ENCODE measurements at regions of chr7 and their contacts with region 1.

Region 1: GRCh38 chr7:17769918-17770317 is 170.4 kb downstream of the SNX13 start:
- DNase-seq: peak; percentile 57 to 71
- H3K4me3 ChIP-seq: no peak overlapping the region
- H3K27ac ChIP-seq: no peak overlapping the region
- H3K4me1 ChIP-seq: peaks cover 24% of the 10 kb centered on the region
- H3K27me3 ChIP-seq: no peaks in the 10 kb centered on the region
- CTCF ChIP-seq: peak; percentile 97

Region 2: GRCh38 chr7:16708980-16709379 is 1060.9 kb before region 1 on chr7:
- CTCF ChIA-PET with region 1: no interaction called
- POLR2A ChIA-PET with region 1: no interaction called
- intact Hi-C with region 1: loop called (anchors 10 kb)
- DNase-seq: peak; percentile 73 to 93
- H3K4me3 ChIP-seq: no peak overlapping the region
- H3K27ac ChIP-seq: peak overlapping the region; percentile 9
- H3K4me1 ChIP-seq: peaks cover 10% of the 10 kb centered on the region
- H3K27me3 ChIP-seq: no peaks in the 10 kb centered on the region
- CTCF ChIP-seq: no peak

Region 3: DNA sequence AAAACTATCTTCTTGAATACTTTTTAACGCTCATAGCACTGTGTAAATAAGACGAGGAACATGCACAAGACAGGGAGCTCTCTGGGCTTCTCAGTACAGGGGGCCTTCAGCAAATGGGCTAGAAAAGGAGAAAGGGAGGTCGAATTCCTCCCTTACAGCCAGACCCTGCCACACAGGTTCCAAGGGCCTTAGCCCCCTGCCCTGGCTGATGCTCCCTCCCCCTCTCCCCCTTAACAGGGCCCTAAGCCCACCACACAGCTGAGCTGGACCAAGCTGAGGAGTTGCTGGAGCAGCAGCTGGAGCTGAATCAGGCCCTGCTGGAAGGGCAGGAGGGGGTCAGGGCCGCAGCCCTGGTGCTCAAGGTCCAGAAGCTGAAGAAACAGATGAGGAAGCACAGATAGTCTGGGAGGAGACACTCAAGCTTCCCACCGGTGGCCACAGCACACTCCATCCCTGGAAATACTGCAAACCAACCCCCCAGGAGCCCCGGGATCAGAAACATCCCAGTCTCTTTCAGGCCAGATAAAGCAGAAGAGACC is 16.5 kb after region 1 on chr7:
- CTCF ChIA-PET with region 1: no interaction called
- POLR2A ChIA-PET with region 1: interaction called, 16 read pairs
- intact Hi-C with region 1: no loop called
- DNase-seq: no peak
- H3K4me3 ChIP-seq: no peak overlapping the region
- H3K27ac ChIP-seq: no peak overlapping the region
- H3K4me1 ChIP-seq: peaks cover 22% of the 10 kb centered on the region
- H3K27me3 ChIP-seq: no peaks in the 10 kb centered on the region
- CTCF ChIP-seq: no peak

Region 4: DNA sequence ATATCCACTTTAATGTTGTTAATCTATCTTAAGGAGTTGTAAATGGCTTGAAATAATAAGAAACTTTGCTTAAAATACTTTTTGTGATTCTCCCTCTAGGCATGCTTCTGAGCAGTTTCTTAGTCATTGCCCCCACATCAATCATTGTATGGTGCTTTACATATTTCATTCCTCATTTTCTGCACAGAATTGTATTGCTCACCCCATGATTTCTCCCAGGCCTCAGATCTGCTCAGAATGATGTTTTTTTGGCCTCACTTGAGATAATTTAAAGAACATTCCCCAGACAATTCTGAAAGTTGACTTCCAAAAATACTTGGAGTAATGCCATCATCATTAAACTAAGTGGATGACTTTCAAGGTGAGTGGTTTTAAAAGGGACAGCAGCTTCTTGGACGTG is 339.8 kb after region 1 on chr7:
- CTCF ChIA-PET with region 1: no interaction called
- POLR2A ChIA-PET with region 1: no interaction called
- intact Hi-C with region 1: no loop called
- DNase-seq: no peak
- H3K4me3 ChIP-seq: no peak overlapping the region
- H3K27ac ChIP-seq: no peak overlapping the region
- H3K4me1 ChIP-seq: no peaks in the 10 kb centered on the region
- H3K27me3 ChIP-seq: no peaks in the 10 kb centered on the region
- CTCF ChIP-seq: no peak

Region 5: GRCh38 chr7:18177815-18178660 is 408.1 kb after region 1 on chr7:
- CTCF ChIA-PET with region 1: no interaction called
- POLR2A ChIA-PET with region 1: no interaction called
- intact Hi-C with region 1: loop called (anchors 10 kb)
- DNase-seq: peak; percentile 59 to 84
- H3K4me3 ChIP-seq: no peak overlapping the region
- H3K27ac ChIP-seq: peak overlapping the region; percentile 43
- H3K4me1 ChIP-seq: peaks cover 43% of the 10 kb centered on the region
- H3K27me3 ChIP-seq: no peaks in the 10 kb centered on the region
- CTCF ChIP-seq: no peak

Region 6: DNA sequence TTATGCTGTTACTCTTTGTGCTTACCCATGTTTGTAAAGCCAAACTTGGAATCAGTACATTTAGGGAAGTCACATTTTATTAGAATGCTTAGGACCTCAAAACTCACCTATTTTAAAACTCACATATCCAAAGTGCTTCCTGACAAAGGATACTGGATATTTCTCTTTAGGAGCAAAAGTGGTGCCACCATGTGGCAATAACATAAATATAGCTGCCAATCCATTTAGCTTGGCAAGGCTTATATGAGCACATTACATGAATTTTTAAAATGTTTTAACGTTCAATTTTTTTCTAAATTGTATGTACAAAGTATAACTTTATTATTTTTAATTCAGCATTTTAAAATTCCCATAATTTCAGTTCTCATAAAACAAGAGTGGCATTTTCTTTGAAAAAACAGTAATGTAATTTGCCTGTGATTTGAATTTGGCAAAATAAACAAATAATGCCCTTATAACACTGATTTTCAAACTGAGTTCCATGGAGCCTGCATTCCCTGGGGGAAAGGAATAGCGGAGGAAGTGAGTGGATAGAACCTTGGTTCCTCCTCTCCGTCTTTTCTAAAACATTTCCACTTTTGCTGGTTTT is 801.1 kb after region 1 on chr7:
- CTCF ChIA-PET with region 1: interaction called, 3 read pairs
- POLR2A ChIA-PET with region 1: interaction called, 6 read pairs
- intact Hi-C with region 1: loop called (anchors 10 kb)
- DNase-seq: peak in 1 of 2 experiments; percentile 63
- H3K4me3 ChIP-seq: no peak overlapping the region
- H3K27ac ChIP-seq: no peak overlapping the region
- H3K4me1 ChIP-seq: no peaks in the 10 kb centered on the region
- H3K27me3 ChIP-seq: no peaks in the 10 kb centered on the region
- CTCF ChIP-seq: peak; percentile 78

Measured in PC-9 (cell line).